AG04449 (cell line): ENCODE measurements at regions of chr7 and their contacts with region 1.

Region 1: DNA sequence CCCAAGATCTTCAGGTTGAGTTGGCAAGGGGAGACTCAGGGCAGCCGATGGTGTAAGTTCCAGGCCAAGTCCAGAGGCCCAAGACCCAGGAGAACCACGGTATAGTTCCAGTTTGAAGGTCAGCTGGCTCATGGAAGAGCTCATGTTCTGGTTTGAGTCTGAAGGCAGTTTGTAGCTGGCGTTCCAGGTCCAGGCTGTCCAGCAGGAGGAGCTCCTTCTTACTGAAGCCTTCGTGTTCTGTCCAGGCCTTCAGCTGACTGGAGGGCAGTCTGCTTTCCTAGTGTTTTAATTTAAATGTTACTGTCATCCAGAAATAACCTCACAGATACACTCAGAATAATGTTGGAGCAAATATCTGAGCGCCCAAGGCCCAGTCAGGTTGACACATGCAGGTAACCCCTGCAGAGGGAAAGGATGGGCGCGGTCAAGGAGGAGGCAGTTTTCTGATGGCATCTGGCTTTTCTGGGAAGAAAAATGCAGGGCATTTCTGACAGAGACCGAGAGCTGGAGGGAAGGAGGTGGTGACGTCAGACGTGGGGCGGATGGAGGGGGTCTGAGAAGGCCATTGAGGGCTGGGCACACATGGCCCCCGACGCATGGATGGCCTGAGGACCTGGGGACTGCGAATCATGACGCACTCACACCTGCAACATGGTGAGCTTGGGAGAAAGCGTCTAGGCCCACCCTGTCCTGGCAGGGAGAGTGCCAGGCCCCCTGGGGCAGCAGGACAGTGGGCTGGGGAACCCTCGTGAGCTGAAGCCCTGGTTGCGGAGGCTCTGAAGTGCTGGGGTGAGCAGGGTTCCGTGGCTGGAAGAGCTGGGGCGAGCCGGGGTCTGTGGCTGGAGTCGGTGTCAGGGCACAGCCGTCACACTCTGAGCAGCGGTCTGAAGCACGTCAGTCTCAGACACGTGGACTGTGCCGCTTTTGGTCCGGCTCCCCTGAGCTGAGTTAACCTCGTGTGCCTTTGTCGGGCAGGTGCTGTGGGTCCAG is 4.4 kb downstream of the SUN1 start:
- DNase-seq: no peak
- H3K4me3 ChIP-seq: no peak overlapping the region
- CTCF ChIP-seq: peak; percentile 61

Region 2: GRCh38 chr7:867672-868486 is 31.2 kb after region 1 on chr7:
- CTCF ChIA-PET with region 1: interaction called, 12 read pairs
- POLR2A ChIA-PET with region 1: interaction called, 3 read pairs
- DNase-seq: no peak
- H3K4me3 ChIP-seq: no peak overlapping the region
- CTCF ChIP-seq: peak; percentile 15

Region 3: DNA sequence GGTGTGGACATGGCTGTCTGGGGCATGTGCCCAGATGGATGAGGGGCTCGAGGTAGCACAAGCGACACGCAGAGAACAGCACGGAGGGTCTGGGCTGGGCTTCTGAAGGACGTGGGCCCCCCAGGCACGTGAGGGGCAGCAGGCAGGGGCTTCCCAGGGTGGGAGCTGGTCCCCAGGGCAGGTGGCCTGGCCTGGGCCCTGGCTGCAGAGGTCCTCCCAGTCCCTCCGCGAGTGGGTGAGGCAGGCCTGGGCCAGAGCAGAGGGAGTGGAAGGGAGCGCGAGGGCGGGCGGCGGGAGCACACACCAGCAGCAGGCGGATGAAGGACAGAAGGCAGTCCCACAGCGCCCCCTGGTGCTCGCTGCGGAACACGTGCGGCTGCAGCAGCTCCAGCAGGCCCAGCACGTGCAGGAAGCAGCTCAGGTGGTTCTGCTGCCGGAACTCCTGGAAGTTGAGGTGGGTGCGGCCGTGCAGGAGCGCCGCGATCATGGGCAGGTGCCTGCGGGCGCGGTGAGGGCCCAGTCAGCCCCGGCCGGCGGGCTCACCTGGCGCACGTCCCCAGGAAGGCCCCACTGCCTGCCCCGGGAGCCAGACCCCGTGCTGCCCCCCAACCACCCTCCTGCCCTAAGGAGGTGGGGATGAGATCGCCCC is 637.3 kb after region 1 on chr7:
- CTCF ChIA-PET with region 1: no interaction called
- POLR2A ChIA-PET with region 1: no interaction called
- DNase-seq: no peak
- H3K4me3 ChIP-seq: no peak overlapping the region
- CTCF ChIP-seq: peak; percentile 97